ENCODE measurements at regions of chr7 and their contacts with region 1.

Region 1: DNA sequence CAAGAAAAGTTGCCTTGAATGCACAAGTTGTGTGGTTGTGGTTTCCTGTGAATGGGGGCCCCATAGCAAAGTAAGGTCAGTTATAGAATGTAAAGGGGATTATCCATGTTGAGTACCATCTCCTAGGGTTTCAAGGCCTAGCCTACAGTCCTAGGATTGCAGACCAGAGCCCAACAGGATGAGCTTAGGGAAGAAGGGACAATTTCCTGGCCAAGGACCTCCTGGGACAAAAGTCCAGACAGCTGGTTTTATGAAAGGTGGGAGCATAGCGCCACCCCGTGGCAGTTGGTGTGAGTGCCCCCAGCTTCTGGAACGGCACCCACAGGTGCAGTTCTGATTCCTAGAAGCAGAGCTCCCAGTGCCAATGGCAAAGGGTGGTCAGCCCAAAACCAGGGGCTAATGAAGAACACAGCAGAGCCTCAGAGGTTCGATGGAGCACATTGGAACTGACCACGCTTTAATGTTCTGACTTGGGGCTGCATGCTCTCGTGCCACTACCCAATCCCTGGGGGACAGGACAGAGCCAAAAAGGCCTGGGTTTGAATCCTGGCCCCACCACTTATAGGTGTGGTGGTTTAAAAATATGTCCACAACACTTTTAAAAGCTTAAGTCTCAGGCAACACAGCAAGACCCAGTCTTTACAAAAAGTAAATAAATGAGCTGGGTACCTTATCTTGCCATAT is 25.8 kb upstream of the TMEM120A start:
- DNase-seq: no peak
- H3K4me3 ChIP-seq: no peak overlapping the region
- H3K27ac ChIP-seq: no peak overlapping the region
- H3K4me1 ChIP-seq: peaks cover 0 to 4% (median 0%) of the 10 kb centered on the region in 3 donors
- H3K27me3 ChIP-seq: no peaks in the 10 kb centered on the region
- CTCF ChIP-seq: peak; percentile 84 to 91 (median 88)
- POLR2A ChIP-seq: no peak

Region 2: DNA sequence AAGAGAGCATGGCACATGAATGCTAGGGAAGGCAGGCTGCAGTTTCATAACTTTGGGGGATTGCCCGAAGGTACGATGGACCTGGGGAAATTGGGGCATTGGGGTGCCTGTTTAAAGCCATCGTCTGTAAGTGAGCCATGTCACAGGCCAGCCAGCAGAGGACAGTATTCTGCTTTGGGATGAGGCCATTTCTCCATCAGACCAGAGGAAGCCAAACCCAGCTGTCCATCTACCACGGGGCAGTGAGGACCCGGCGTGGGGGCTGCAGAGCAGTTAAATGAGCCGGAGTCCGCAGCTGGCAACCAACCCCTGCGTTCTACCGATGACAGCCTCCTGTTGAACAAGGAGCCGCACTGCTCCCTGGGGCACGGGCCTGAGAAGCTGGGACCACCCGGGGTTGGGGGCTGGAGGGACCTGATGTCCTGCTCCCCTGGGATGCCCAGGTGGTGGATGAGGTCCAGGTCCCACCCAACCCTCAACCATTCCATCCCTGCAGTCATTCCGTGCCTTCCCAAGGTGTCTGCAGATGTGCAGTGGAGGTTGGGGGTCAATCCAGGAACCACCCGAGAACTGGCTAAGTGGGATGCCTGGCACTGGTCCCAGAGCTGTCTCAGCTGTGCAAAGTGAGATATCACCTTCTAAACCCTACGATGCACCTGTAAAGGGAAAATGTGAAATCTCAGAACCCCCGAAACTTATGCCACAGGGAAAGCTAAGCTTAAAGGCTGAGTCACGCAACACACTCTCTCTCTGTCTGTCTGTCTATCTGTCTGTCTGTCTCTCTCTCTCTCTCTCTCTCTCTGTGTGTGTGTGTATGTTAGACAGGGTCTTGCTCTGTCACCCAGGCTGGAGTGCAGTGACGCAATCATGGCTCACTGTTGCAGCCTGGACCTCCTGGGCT is 153.4 kb before region 1 on chr7:
- intact Hi-C with region 1: loop called (anchors 5 kb)
- DNase-seq: no peak
- H3K4me3 ChIP-seq: no peak overlapping the region
- H3K27ac ChIP-seq: no peak overlapping the region
- H3K4me1 ChIP-seq: peaks cover 0 to 11% (median 3%) of the 10 kb centered on the region in 3 donors
- H3K27me3 ChIP-seq: no peaks in the 10 kb centered on the region
- CTCF ChIP-seq: peak; percentile 68 to 93 (median 88)
- POLR2A ChIP-seq: no peak